ENCODE measurements at regions of chrX and their contacts with region 1.

Region 1: GRCh38 chrX:13653022-13653693 is at the start of gene TCEANC:
- DNase-seq: peak; percentile 91
- H3K4me3 Mint-ChIP-seq: peak within 1 kb of the TSS; percentile 84
- H3K27ac Mint-ChIP-seq: peak within 1 kb of the TSS; percentile 89
- H3K4me1 Mint-ChIP-seq: peaks cover 17% of the 10 kb centered on the region
- H3K27me3 Mint-ChIP-seq: no peaks in the 10 kb centered on the region
- total RNA-seq, gene TCEANC: 2.5 and 2.8 TPM in 2 replicates

Region 2: DNA sequence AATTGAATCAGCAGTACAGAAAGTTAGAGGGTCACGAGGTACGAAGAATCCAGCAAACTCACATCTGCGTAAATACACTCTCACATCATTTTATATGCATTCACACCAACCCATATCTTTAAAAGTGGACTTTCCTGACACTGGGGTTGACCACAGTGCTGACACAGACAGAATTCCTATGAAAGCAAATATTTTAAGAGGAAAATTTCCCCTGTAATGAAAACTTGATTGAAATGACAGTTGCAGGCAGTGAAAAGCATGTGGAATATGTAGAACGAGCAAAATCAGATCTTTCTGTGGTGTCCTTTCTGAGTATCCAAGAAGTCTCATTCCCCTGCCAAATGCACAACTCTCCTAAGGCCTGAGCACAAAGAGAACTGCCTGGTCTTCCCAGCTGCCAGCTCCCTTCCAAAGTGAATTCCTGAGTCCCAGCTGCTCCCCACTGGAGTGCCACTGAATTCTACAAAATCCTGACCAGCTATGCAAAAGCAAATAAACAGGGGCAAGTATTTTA is 558.3 kb before region 1 on chrX:
- intact Hi-C with region 1: loop called (anchors 2 kb)
- DNase-seq: no peak
- H3K4me3 Mint-ChIP-seq: no peak overlapping the region
- H3K27ac Mint-ChIP-seq: peak overlapping the region; percentile 69
- H3K4me1 Mint-ChIP-seq: peaks cover 63% of the 10 kb centered on the region
- H3K27me3 Mint-ChIP-seq: no peaks in the 10 kb centered on the region

Region 3: GRCh38 chrX:13322804-13323203 is 330.4 kb before region 1 on chrX:
- intact Hi-C with region 1: no loop called
- DNase-seq: no peak
- H3K4me3 Mint-ChIP-seq: no peak overlapping the region
- H3K27ac Mint-ChIP-seq: no peak overlapping the region
- H3K4me1 Mint-ChIP-seq: no peaks in the 10 kb centered on the region
- H3K27me3 Mint-ChIP-seq: no peaks in the 10 kb centered on the region

Region 4: DNA sequence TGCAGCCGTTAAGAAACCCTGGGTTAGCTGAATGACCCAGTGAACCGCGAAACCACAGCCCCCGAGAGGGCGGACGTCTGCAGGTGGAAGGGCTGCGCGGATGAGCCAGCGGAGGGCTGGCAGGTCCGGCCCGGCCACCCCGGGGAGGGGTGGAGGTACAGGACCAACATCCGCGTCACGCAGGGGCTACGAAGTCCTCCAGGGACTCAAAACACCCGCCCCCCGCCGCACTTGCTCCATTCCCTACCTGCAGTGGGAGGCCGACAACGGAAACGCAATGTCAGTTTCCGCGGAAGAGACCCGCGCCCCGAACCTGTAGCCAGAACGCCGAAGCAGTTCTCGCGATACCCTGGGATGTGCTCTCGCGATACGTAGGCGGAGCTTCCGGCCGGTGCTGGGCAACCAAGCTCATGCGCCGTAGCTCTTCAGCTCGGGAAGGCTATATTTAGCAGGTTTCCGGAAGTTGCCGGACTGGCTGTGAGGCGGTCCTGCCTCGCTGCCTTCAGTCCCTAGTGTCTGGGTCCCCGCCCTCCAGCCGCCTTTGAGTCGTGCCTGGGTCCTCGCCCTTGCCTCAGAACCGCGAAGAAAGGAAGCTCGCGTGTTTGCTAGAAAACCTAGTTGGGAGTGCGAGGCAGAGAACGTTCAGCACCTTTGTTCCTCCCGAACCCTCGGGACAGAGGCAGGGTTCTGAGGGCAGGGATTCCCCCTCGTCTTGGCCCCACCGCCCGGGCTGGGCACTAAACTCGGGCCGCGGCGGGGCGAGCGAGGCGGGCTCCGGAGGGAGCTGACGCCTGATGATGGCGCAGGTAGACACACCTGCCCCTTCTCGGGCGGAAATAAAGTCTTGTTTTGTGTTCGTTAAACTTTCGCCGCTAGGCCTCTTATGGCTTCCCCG is 81.4 kb after region 1 on chrX and contains the starts of genes OFD1 and TRAPPC2:
- intact Hi-C with region 1: loop called (anchors 2 kb)
- DNase-seq: peak; percentile 87
- H3K4me3 Mint-ChIP-seq: peak within 1 kb of the TSS; percentile 95
- H3K27ac Mint-ChIP-seq: peak within 1 kb of the TSS; percentile 96
- H3K4me1 Mint-ChIP-seq: peaks cover 39% of the 10 kb centered on the region
- H3K27me3 Mint-ChIP-seq: no peaks in the 10 kb centered on the region
- total RNA-seq, gene OFD1: 21.0 and 23.4 TPM in 2 replicates
- total RNA-seq, gene TRAPPC2: 14.7 and 15.2 TPM in 2 replicates

Measured in activated T-helper 2 cell treated with anti-CD3 and anti-CD28 coated beads, Interferon-gamma antibody, Interleukin-2, Interleukin-4, amounts not matched to agents 10 μg/mL and 5 μg/mL and 100 μg/mL, durations not matched to agents 14 hours and 24 hours and 36 hours (primary cell).